Activated B cell treated with CpG ODN at 0.5 μM for 24 hours (primary cell): ENCODE measurements at regions of chr5 and their contacts with region 1.

Region 1: DNA sequence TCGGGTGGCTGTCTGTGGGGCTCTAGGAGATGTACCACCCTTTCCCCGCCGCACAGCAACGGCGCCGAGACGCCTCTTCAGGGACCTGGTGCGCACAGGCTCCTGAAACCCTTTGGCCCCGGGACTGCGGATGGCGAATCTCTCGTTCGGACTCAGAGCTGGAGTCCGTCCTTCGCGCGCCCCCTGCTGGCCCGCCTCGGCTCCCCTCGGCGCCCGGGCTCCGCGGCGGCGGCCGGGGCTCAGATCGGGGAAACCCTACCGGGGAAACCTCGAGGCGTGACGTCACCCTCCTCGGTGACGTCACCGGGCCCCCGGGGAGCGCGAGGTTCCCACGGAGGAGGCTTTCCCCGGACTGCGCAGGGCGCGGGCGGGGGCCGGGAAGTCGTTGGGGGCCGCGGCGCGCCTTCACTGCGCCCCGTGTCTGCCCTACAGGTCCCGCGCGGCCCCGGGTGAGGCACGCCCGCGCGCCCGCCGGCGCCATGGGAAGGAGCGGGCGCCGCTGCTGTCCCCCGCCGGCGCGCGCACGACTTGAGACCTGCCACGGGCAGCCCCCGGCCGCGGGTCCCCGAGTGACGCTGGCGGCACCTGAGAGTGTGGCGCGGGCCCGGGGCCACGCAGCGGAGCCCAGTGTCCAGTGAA is 7.9 kb downstream of the PRR7 start:
- DNase-seq: peak; percentile 97
- ATAC-seq: peak; percentile 48
- H3K4me3 Mint-ChIP-seq: peak overlapping the region; percentile 91
- H3K27ac Mint-ChIP-seq: peak overlapping the region; percentile 12
- H3K4me1 Mint-ChIP-seq: peaks cover 28% of the 10 kb centered on the region
- H3K27me3 Mint-ChIP-seq: no peaks in the 10 kb centered on the region
- CTCF ChIP-seq: no peak

Region 2: GRCh38 chr5:177311723-177312648 is 142.5 kb before region 1 on chr5 and contains the start of gene MXD3:
- CTCF ChIA-PET with region 1: interaction called, 7 read pairs
- POLR2A ChIA-PET with region 1: no interaction called
- intact Hi-C with region 1: loop called (anchors 2 kb)
- DNase-seq: peak; percentile 89
- ATAC-seq: peak; percentile 90
- H3K4me3 Mint-ChIP-seq: peak within 1 kb of the TSS; percentile 80
- H3K27ac Mint-ChIP-seq: peak within 1 kb of the TSS; percentile 47
- H3K4me1 Mint-ChIP-seq: peaks cover 38% of the 10 kb centered on the region
- H3K27me3 Mint-ChIP-seq: no peaks in the 10 kb centered on the region
- CTCF ChIP-seq: no peak
- total RNA-seq, gene MXD3: 7.6 and 9.1 TPM in 2 replicates

Region 3: GRCh38 chr5:177351385-177352329 is 102.9 kb before region 1 on chr5 and contains the start of gene LMAN2:
- CTCF ChIA-PET with region 1: interaction called, 5 read pairs
- POLR2A ChIA-PET with region 1: interaction called, 17 read pairs
- intact Hi-C with region 1: no loop called
- DNase-seq: peak; percentile 83
- ATAC-seq: peak; percentile 98
- H3K4me3 Mint-ChIP-seq: peak within 1 kb of the TSS; percentile 98
- H3K27ac Mint-ChIP-seq: peak within 1 kb of the TSS; percentile 100
- H3K4me1 Mint-ChIP-seq: peaks cover 59% of the 10 kb centered on the region
- H3K27me3 Mint-ChIP-seq: no peaks in the 10 kb centered on the region
- CTCF ChIP-seq: no peak
- total RNA-seq, gene LMAN2: 88.0 and 89.7 TPM in 2 replicates

Region 4: DNA sequence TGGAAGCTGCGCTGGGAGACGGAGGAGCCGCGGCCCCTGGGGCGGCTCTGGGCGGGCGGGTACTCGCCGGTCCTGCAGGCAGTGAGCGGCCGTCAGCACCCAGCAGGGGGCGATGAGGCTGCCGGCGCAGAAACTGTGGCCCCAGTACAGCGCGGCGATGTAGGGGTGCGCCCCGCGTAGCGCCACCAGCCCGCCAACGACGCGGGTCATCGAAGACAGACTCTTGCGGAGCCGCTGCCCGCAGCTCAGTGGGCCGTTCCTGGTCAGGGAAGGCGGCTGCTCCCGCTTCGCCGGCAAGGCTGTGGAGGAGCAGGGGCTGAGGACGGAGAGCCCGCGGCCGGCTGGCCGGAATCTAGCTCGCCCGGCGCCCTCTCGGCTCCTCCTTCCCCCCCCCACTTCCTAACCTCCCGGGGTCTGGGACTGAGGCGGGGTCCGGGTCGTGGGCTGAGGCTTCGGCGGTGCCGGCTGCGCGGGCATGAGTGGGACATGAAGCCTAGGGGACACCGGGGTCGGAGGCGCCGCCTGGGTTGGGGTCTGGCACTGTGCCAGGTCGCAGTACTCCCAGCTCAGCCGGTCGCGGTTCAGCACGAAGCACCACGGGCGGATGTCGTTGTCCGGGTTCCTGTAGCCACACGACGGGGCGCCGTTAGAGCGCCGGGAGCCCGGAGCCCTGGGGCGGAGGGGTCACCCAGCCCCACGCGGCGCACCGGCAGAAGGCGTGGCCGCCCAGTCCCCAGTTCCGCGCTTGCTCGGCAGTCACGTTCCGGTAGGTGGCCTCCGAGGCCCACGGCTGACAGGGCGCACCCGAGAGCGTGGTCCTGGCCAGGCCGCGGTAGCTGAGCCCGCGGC is 50.5 kb before region 1 on chr5:
- CTCF ChIA-PET with region 1: interaction called, 293 read pairs
- POLR2A ChIA-PET with region 1: interaction called, 88 read pairs
- intact Hi-C with region 1: loop called (anchors 1 kb)
- DNase-seq: peak; percentile 77
- ATAC-seq: peak; percentile 82
- H3K4me3 Mint-ChIP-seq: peak overlapping the region; percentile 79
- H3K27ac Mint-ChIP-seq: no peak overlapping the region
- H3K4me1 Mint-ChIP-seq: peaks cover 39% of the 10 kb centered on the region
- H3K27me3 Mint-ChIP-seq: peaks cover 5% of the 10 kb centered on the region
- CTCF ChIP-seq: peak; percentile 7

Region 5: DNA sequence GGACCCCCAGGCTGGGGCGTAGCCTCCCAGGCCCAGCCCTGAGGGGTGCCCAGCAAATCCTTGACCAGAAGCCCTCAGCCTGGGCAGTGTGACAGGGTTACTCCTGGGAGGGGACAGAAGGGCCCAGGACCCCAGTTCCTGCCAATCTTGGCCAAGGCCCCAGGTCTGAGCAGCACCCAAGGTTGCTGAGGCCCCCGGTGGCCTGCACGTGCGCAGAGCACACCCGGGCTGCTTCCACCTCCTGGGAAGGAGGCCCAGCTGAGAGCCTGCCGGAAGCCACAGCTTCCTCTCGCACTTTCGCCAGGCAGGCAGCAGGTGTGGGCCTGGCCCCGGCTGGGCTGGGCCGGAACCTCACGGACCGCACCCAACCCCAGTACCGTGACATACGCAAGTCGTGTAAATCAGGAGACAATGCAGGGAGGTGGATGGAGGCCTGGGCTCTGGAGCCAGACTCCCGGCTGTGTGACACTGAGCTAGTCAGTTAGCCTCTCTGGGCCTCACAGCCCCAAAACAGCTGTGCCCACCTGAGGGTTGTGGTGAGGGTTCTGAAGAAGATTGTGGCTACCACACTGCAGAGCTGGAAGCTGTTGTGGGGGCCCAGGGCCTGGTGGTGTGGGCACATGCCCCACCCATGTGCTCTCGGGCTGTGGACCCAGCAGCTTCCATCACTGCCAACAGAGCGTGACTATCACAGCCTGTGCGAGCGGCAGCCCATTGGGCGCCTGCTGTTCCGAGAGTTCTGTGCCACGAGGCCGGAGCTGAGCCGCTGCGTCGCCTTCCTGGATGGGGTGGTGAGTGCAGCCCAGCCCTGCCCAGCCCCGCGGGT is 23.0 kb before region 1 on chr5:
- CTCF ChIA-PET with region 1: interaction called, 20 read pairs
- POLR2A ChIA-PET with region 1: interaction called, 296 read pairs
- intact Hi-C with region 1: loop called (anchors 1 kb)
- DNase-seq: peak; percentile 73
- ATAC-seq: peak; percentile 53
- H3K4me3 Mint-ChIP-seq: peak overlapping the region; percentile 88
- H3K27ac Mint-ChIP-seq: peak overlapping the region; percentile 89
- H3K4me1 Mint-ChIP-seq: peaks cover 70% of the 10 kb centered on the region
- H3K27me3 Mint-ChIP-seq: no peaks in the 10 kb centered on the region
- CTCF ChIP-seq: no peak

Region 6: DNA sequence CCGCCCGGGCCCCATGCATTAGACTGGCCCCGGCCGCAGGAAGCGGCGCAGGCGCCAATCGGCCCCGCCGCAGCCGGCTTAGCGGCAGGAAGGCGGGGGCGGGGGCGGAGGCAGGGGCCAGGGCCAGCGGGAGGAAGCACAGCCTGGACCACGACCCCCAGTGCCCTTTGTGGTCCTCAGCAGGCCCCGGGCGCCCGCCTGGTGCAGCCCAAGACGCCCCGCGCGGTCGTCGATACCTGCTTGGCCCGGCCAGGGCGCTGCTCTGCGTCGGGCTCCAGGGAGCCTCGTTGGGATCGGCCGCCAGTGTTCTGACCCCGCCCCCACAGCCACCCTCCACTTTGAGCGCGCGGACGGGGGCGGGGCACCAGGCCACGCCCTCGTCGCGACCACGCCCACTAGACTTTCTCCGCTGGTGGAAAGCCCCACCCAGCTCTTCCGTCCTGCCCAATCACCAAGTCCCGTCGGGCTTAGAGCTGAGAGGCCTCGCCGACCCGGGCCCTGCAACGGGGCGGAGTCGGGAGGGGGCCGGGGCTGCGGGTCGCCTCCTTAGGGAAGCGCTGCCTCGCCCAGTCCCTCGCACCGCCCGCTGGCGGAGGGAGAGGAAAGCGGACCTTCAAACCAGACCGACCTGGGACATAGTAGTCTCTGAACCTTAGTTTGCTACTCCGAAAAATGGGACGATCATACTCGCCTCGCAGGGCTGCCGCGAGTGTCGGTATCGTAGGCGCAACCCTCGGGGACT is 42.9 kb after region 1 on chr5 and contains the start of gene PDLIM7:
- CTCF ChIA-PET with region 1: interaction called, 28 read pairs
- POLR2A ChIA-PET with region 1: interaction called, 22 read pairs
- intact Hi-C with region 1: loop called (anchors 1 kb)
- DNase-seq: peak; percentile 97
- ATAC-seq: peak; percentile 83
- H3K4me3 Mint-ChIP-seq: peak within 1 kb of the TSS; percentile 80
- H3K27ac Mint-ChIP-seq: peak within 1 kb of the TSS; percentile 39
- H3K4me1 Mint-ChIP-seq: peaks cover 79% of the 10 kb centered on the region
- H3K27me3 Mint-ChIP-seq: peaks cover 2% of the 10 kb centered on the region
- CTCF ChIP-seq: no peak
- total RNA-seq, gene PDLIM7: 17.0 and 17.7 TPM in 2 replicates

Region 7: GRCh38 chr5:177576169-177576568 is 121.7 kb after region 1 on chr5:
- CTCF ChIA-PET with region 1: no interaction called
- POLR2A ChIA-PET with region 1: no interaction called
- intact Hi-C with region 1: no loop called
- DNase-seq: no peak
- ATAC-seq: no peak
- H3K4me3 Mint-ChIP-seq: no peak overlapping the region
- H3K27ac Mint-ChIP-seq: no peak overlapping the region
- H3K4me1 Mint-ChIP-seq: no peaks in the 10 kb centered on the region
- H3K27me3 Mint-ChIP-seq: no peaks in the 10 kb centered on the region
- CTCF ChIP-seq: no peak

Region 8: GRCh38 chr5:177592010-177592834 is 137.7 kb after region 1 on chr5 and contains the start of gene TMED9:
- CTCF ChIA-PET with region 1: interaction called, 5 read pairs
- POLR2A ChIA-PET with region 1: no interaction called
- intact Hi-C with region 1: loop called (anchors 2 kb)
- DNase-seq: peak; percentile 85
- ATAC-seq: peak; percentile 98
- H3K4me3 Mint-ChIP-seq: peak within 1 kb of the TSS; percentile 100
- H3K27ac Mint-ChIP-seq: peak within 1 kb of the TSS; percentile 98
- H3K4me1 Mint-ChIP-seq: peaks cover 20% of the 10 kb centered on the region
- H3K27me3 Mint-ChIP-seq: peaks cover 7% of the 10 kb centered on the region
- CTCF ChIP-seq: no peak
- total RNA-seq, gene TMED9: 78.4 and 82.2 TPM in 2 replicates